ENCODE measurements at regions of chr13 and their contacts with region 1.

Region 1: DNA sequence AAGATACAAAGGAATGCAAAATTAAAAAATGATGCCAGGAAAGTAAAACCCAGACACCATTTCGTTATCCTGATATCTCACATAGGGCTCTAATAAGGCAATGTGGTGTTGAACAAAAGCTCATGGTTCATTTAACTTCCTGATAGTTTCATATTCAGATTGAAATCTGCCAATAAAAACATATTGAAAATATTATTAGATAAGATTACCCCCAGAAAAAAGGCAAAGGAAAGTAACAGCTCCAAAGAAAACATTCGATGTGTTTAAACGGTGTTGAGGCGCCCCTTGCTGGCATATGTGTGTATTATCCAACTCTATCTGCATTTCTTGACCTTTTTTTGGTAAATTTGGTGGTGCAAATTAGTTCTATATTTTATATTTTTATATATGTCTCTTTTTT is 75.9 kb downstream of the ESD start:
- DNase-seq: no peak
- CTCF ChIP-seq: peak; percentile 64

Region 2: DNA sequence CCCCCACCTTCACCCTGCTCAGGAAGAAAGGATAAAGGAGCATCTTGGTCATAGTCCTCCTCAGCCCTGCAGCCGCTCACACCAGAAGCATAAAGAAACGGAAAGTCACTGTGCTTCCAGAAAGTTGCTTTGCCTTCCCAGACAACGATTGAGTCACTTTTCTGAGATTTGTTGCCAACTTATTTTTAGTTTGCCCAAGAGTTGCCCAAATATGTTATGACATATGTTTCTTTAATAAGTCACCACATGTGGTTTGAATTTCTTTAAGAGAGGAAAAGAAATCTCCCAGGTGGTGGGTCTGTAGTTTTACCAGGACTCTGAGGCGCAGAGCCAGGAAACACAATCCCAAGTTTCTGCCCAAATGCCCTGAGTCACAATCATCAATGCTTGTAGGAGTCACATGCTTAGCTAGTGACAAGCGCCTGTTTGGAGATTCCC is 231.4 kb before region 1 on chr13:
- in situ Hi-C with region 1: loop called (anchors 10 kb)
- DNase-seq: no peak
- CTCF ChIP-seq: no peak

Measured in GM13977 (cell line).